ENCODE measurements at regions of chr3 and their contacts with region 1.

Region 1: GRCh38 chr3:16550676-16551341 is 37.3 kb upstream of the RFTN1 start:
- DNase-seq: peak; percentile 61 to 75
- H3K4me3 ChIP-seq: no peak overlapping the region
- H3K27ac ChIP-seq: no peak overlapping the region
- H3K4me1 ChIP-seq: no peaks in the 10 kb centered on the region
- H3K27me3 ChIP-seq: no peaks in the 10 kb centered on the region
- CTCF ChIP-seq: peak; percentile 89

Region 2: DNA sequence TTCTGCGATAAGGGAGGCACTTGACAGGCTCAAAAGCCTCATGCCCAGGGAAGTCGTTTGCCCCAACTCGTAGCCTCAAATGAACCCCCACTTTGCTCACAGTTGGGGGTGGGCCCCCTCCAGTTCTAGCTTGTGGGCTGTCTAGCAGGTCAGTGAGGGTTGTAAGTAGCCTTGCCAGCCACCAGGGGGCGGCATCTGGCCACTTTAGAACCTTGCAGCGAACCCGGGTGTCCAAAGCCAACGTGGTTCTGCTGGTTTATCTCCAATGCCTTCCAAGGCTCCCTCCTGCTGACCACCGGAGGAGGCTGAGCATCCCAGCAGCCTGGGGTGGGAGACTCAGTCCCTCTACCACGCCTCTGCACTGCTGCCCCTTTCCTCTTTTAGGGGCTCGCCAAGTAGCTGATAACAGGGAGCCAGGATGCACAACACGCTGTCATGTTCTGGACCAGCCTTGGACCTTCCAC is 1442.7 kb before region 1 on chr3:
- CTCF ChIA-PET with region 1: no interaction called
- POLR2A ChIA-PET with region 1: no interaction called
- intact Hi-C with region 1: loop called (anchors 10 kb)
- DNase-seq: peak in 1 of 2 experiments; percentile 62
- H3K4me3 ChIP-seq: no peak overlapping the region
- H3K27ac ChIP-seq: no peak overlapping the region
- H3K4me1 ChIP-seq: no peaks in the 10 kb centered on the region
- H3K27me3 ChIP-seq: peaks cover 11% of the 10 kb centered on the region; the same call in 1 of the 2 replicates
- CTCF ChIP-seq: peak; percentile 94

Region 3: GRCh38 chr3:16048435-16049318 is 502.1 kb before region 1 on chr3:
- CTCF ChIA-PET with region 1: no interaction called
- POLR2A ChIA-PET with region 1: no interaction called
- intact Hi-C with region 1: loop called (anchors 5 kb)
- DNase-seq: peak; percentile 25 to 36
- H3K4me3 ChIP-seq: peak overlapping the region; percentile 30; the same call in 1 of the 2 replicates
- H3K27ac ChIP-seq: no peak overlapping the region
- H3K4me1 ChIP-seq: no peaks in the 10 kb centered on the region
- H3K27me3 ChIP-seq: no peaks in the 10 kb centered on the region
- CTCF ChIP-seq: peak; percentile 93

Region 4: GRCh38 chr3:17782751-17783150 is 1231.9 kb after region 1 on chr3:
- CTCF ChIA-PET with region 1: no interaction called
- POLR2A ChIA-PET with region 1: no interaction called
- intact Hi-C with region 1: no loop called
- DNase-seq: no peak
- H3K4me3 ChIP-seq: no peak overlapping the region
- H3K27ac ChIP-seq: no peak overlapping the region
- H3K4me1 ChIP-seq: no peaks in the 10 kb centered on the region
- H3K27me3 ChIP-seq: no peaks in the 10 kb centered on the region
- CTCF ChIP-seq: no peak

Measured in PC-9 (cell line).